CD4-positive, alpha-beta T cell (primary cell): ENCODE measurements at regions of chr2 and their contacts with region 1.

Region 1: DNA sequence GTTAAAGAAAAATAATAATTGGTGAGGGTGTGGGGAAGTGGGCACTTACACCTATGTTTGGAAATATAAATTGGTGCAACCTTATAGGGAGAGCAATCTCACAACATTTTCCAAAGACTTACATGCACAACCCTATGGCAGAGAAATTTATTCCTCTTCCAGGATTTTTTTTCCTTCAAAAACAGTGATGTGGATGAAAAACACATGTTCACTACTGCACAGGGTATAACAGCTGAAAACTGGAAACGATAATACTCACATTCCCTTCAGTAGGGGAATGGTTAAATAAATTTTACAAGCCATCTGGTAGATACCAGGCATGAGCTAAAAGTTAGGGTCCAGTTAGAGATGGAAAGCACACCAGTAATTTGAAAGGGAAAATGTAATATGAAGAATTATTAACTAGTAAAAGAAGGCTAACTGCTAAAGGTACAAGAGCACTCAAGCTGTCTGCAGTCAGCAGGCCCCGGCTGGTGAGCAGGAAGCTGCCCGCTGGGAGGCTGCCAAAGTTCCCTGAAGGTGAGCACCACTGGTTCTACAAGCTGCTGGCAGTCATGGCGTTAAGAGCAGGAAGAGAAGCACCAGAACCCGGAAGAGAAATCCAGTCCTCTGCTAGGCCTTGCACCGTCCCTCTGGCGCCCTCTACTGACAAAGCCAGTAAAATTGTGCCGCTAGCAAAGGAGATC is 28.4 kb upstream of the CASP8 start:
- DNase-seq: peak; percentile 78 to 97 (median 88)
- ATAC-seq: peak; percentile 51
- H3K4me3 ChIP-seq: peak overlapping the region; percentile 4
- H3K4me3 Mint-ChIP-seq: peak overlapping the region; percentile 97
- H3K27ac ChIP-seq: no peak overlapping the region
- H3K27ac Mint-ChIP-seq: peak overlapping the region; percentile 95
- H3K4me1 ChIP-seq: peaks cover 36% of the 10 kb centered on the region
- H3K4me1 Mint-ChIP-seq: peaks cover 70% of the 10 kb centered on the region
- H3K27me3 ChIP-seq: no peaks in the 10 kb centered on the region
- H3K27me3 Mint-ChIP-seq: no peaks in the 10 kb centered on the region
- CTCF ChIP-seq: peak; percentile 85

Region 2: DNA sequence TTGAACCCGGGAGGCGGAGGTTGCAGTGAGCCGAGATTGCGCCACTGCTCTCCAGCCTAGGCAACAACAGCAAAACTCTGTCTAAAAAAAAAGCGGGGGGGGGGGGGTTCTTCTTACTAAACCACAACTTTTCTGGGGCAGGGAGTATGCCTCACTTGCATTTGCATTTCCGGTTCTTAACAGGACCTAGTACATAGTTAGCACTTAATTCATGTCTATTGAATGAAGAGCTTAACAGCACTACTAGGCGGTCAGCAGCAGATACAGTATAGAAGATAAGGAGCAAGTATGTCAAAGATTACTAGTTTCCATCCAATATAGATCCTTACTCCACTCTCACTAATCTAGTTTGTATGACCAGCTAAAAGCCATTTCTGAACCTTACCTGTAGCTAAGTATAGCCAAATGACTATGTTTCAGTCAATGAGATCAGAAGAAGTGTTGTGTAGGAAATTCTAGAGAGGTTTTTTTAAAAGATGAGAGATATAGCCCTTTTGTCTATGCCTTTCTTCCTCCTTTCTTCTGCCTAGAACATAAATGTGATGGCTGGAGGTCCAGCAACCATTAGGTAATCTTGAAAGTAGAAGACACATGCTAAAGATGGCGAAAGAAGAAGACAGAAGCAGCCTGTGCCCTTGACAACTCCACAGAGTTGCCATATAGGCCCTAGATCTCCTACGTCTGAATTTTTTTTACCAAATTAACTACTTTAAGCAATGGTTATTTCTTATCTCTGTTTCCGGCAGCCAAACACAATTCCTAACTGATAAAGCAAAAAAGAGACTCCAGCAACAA is 171.8 kb before region 1 on chr2:
- CTCF ChIA-PET with region 1: no interaction called
- POLR2A ChIA-PET with region 1: no interaction called
- intact Hi-C with region 1: no loop called
- DNase-seq: peak in 2 of 14 experiments; percentile 15 to 44
- ATAC-seq: peak; percentile 29
- H3K4me3 ChIP-seq: no peak overlapping the region
- H3K4me3 Mint-ChIP-seq: no peak overlapping the region
- H3K27ac ChIP-seq: no peak overlapping the region
- H3K27ac Mint-ChIP-seq: peak overlapping the region; percentile 32
- H3K4me1 ChIP-seq: peaks cover 9% of the 10 kb centered on the region
- H3K4me1 Mint-ChIP-seq: peaks cover 57% of the 10 kb centered on the region
- H3K27me3 ChIP-seq: no peaks in the 10 kb centered on the region
- H3K27me3 Mint-ChIP-seq: no peaks in the 10 kb centered on the region
- CTCF ChIP-seq: no peak

Region 3: GRCh38 chr2:201071479-201072200 is 160.3 kb before region 1 on chr2 and contains the starts of genes HYCC2 and NDUFB3:
- CTCF ChIA-PET with region 1: interaction called, 9 read pairs
- POLR2A ChIA-PET with region 1: interaction called, 5 read pairs
- intact Hi-C with region 1: loop called in 1 of 2 experiments (anchors 5 kb)
- DNase-seq: peak; percentile 85 to 98 (median 90)
- ATAC-seq: peak; percentile 92
- H3K4me3 ChIP-seq: peak within 1 kb of the TSS; percentile 87
- H3K4me3 Mint-ChIP-seq: peak within 1 kb of the TSS; percentile 99
- H3K27ac ChIP-seq: peak within 1 kb of the TSS; percentile 84 to 93
- H3K27ac Mint-ChIP-seq: peak within 1 kb of the TSS; percentile 97
- H3K4me1 ChIP-seq: peaks cover 18% of the 10 kb centered on the region
- H3K4me1 Mint-ChIP-seq: peaks cover 50% of the 10 kb centered on the region
- H3K27me3 ChIP-seq: no peaks in the 10 kb centered on the region
- H3K27me3 Mint-ChIP-seq: no peaks in the 10 kb centered on the region
- CTCF ChIP-seq: peak; percentile 39
- total RNA-seq, gene HYCC2: 29.2 to 30.7 TPM
- total RNA-seq, gene NDUFB3: 10.1 to 13.6 TPM

Region 4: DNA sequence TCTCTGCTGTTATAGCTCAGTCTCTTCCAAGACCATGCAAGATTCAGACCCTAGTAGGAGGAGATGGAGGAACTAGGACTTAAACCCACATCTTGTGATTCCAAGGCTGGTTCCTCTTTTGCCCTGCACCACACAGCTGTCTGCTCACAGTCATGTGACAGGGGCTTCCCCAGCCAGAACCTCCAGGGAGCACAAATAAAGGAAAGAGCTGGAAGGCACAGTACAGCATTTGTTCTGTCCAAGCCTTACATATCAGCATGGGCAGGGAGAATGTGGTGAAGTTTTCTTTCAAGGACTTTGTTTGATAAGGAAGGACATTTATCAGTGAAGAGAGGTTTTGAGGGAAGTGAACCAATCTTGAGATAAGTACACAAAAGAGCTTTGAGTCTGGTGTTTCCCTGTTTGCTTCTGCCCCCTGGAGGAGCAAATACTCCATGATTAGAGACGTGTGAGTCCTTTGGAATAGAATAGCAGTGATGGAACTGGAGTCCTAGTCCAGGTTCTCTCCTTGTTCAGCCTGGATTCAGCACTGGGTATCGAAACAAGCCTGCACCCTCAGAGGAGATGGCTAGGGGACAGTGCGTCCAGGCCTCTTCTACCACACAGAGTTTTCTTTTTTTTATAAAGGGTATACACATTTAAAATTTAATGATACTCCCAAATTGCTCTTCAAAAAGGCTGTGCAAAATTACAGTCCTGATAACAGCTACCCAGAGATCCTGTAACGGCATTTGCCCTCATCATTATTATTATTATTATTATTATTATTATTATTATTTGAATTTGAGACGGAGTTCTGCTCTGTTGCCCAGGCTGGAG is 73.6 kb before region 1 on chr2:
- CTCF ChIA-PET with region 1: interaction called, 19 read pairs
- POLR2A ChIA-PET with region 1: interaction called, 11 read pairs
- intact Hi-C with region 1: no loop called
- DNase-seq: peak in 13 of 14 experiments; percentile 20 to 84 (median 50)
- ATAC-seq: peak; percentile 93
- H3K4me3 ChIP-seq: no peak overlapping the region
- H3K4me3 Mint-ChIP-seq: no peak overlapping the region
- H3K27ac ChIP-seq: peak overlapping the region; percentile 52 to 63
- H3K27ac Mint-ChIP-seq: peak overlapping the region; percentile 82
- H3K4me1 ChIP-seq: peaks cover 13% of the 10 kb centered on the region
- H3K4me1 Mint-ChIP-seq: peaks cover 12% of the 10 kb centered on the region
- H3K27me3 ChIP-seq: no peaks in the 10 kb centered on the region
- H3K27me3 Mint-ChIP-seq: no peaks in the 10 kb centered on the region
- CTCF ChIP-seq: peak; percentile 70

Region 5: GRCh38 chr2:201220102-201220570 is 11.8 kb before region 1 on chr2:
- CTCF ChIA-PET with region 1: interaction called, 54 read pairs
- POLR2A ChIA-PET with region 1: interaction called, 8 read pairs
- intact Hi-C with region 1: no loop called
- DNase-seq: peak in 5 of 14 experiments; percentile 20 to 30 (median 28)
- ATAC-seq: peak; percentile 29
- H3K4me3 ChIP-seq: no peak overlapping the region
- H3K4me3 Mint-ChIP-seq: peak overlapping the region; percentile 32
- H3K27ac ChIP-seq: peak overlapping the region in 1 of 2 donors; percentile 48
- H3K27ac Mint-ChIP-seq: peak overlapping the region; percentile 81
- H3K4me1 ChIP-seq: peaks cover 27% of the 10 kb centered on the region
- H3K4me1 Mint-ChIP-seq: peaks cover 65% of the 10 kb centered on the region
- H3K27me3 ChIP-seq: no peaks in the 10 kb centered on the region
- H3K27me3 Mint-ChIP-seq: no peaks in the 10 kb centered on the region
- CTCF ChIP-seq: no peak

Region 6: DNA sequence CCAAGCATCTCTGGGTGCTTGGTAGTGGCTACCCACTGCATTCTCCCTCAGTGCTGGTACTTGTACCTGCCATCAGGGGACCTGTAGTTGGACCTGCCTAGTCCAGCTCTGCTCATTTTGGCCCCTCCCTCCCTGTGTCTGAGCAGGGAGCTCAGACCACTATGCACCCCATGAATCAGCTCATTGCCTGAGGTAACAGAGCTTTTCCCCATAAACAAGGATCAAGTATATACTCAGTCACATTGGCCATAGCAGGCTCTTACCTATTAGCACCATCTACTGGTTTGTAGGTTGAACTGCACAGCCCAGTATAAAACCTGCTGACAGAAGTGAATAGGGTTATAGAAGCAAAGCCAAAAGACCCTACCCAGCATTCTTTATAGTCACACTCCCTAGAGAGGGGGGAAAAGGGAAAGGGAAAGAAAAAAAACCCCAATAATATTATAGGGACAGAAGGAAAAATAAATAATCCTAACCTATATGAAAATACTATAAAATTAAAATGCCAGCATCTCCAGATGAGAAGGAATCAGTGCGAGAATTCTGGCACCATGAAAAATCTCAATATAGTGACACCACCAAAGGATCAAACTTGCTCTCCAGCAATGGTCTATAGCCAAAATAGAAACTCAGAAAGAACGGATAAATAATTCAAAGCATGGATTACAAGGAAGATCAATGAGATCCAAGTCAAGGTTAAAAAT is 132.1 kb after region 1 on chr2:
- CTCF ChIA-PET with region 1: interaction called, 22 read pairs
- POLR2A ChIA-PET with region 1: interaction called, 14 read pairs
- intact Hi-C with region 1: loop called (anchors 1 kb)
- DNase-seq: peak in 7 of 14 experiments; percentile 3 to 75 (median 48)
- ATAC-seq: peak; percentile 97
- H3K4me3 ChIP-seq: no peak overlapping the region
- H3K4me3 Mint-ChIP-seq: no peak overlapping the region
- H3K27ac ChIP-seq: no peak overlapping the region
- H3K27ac Mint-ChIP-seq: peak overlapping the region; percentile 28
- H3K4me1 ChIP-seq: peaks cover 17% of the 10 kb centered on the region
- H3K4me1 Mint-ChIP-seq: peaks cover 36% of the 10 kb centered on the region
- H3K27me3 ChIP-seq: no peaks in the 10 kb centered on the region
- H3K27me3 Mint-ChIP-seq: no peaks in the 10 kb centered on the region
- CTCF ChIP-seq: peak; percentile 95

Region 7: DNA sequence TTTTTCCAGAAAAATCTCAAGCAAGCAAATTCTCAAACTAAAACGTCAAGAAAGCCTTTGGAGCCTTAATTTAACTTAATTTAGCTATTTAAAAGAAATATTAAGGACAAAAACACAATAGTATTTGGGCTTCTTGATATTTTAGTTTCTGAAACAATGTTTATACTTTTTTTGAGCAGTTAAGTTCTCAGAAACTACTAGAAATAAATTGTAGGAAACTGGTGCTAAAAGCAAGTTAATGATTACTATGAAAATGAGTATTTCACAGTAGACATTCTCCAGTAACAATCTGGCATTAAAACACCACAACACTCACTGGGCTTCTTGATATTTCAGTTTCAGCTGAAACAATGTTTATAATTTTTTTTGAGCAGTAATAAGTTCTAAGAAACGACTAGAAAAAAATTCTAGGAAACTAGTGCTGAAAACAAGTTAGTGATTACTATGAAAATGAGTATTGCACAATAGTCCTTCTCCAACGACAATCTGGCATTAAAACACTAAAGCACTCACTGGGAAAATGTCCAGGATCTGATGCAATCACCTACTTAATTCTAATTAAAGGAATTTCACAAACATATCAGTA is 174.2 kb after region 1 on chr2:
- CTCF ChIA-PET with region 1: no interaction called
- POLR2A ChIA-PET with region 1: no interaction called
- intact Hi-C with region 1: no loop called
- DNase-seq: no peak
- ATAC-seq: no peak
- H3K4me3 ChIP-seq: no peak overlapping the region
- H3K4me3 Mint-ChIP-seq: no peak overlapping the region
- H3K27ac ChIP-seq: no peak overlapping the region
- H3K27ac Mint-ChIP-seq: no peak overlapping the region
- H3K4me1 ChIP-seq: no peaks in the 10 kb centered on the region
- H3K4me1 Mint-ChIP-seq: peaks cover 48% of the 10 kb centered on the region
- H3K27me3 ChIP-seq: no peaks in the 10 kb centered on the region
- H3K27me3 Mint-ChIP-seq: no peaks in the 10 kb centered on the region
- CTCF ChIP-seq: no peak

Region 8: GRCh38 chr2:201847481-201847880 is 615.6 kb after region 1 on chr2:
- CTCF ChIA-PET with region 1: no interaction called
- POLR2A ChIA-PET with region 1: no interaction called
- intact Hi-C with region 1: no loop called
- DNase-seq: no peak
- ATAC-seq: no peak
- H3K4me3 ChIP-seq: no peak overlapping the region
- H3K4me3 Mint-ChIP-seq: no peak overlapping the region
- H3K27ac ChIP-seq: no peak overlapping the region
- H3K27ac Mint-ChIP-seq: no peak overlapping the region
- H3K4me1 ChIP-seq: no peaks in the 10 kb centered on the region
- H3K4me1 Mint-ChIP-seq: no peaks in the 10 kb centered on the region
- H3K27me3 ChIP-seq: peaks cover 0 to 6% of the 10 kb centered on the region in 2 experiments
- H3K27me3 Mint-ChIP-seq: peaks cover 12% of the 10 kb centered on the region
- CTCF ChIP-seq: no peak

Region 9: DNA sequence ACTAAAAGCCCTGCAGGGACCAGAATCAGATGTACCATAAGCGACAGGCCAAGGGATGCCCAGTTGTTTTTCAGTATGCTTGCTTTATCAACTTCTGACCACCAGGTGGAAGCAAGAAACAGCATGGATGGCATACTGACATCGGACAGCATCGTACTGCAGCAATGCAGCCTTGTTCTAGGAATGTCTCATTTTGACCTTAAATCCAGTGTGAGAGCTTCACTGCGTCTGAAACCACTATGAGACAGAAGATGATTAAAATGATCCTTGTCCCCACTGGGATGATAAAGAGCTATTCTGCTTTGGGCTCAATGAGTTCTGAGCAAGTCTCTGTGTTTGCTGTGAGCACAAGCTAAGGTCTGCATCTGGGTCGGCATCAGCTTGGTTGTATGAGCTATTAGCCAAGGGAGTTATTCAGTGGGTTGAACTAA is 628.7 kb after region 1 on chr2:
- CTCF ChIA-PET with region 1: no interaction called
- POLR2A ChIA-PET with region 1: no interaction called
- intact Hi-C with region 1: loop called in 1 of 2 experiments (anchors 5 kb)
- DNase-seq: peak in 11 of 14 experiments; percentile 3 to 72 (median 19)
- ATAC-seq: peak; percentile 71
- H3K4me3 ChIP-seq: no peak overlapping the region
- H3K4me3 Mint-ChIP-seq: no peak overlapping the region
- H3K27ac ChIP-seq: no peak overlapping the region
- H3K27ac Mint-ChIP-seq: no peak overlapping the region
- H3K4me1 ChIP-seq: peaks cover 9% of the 10 kb centered on the region
- H3K4me1 Mint-ChIP-seq: peaks cover 20% of the 10 kb centered on the region
- H3K27me3 ChIP-seq: peaks cover 0 to 7% of the 10 kb centered on the region in 2 experiments
- H3K27me3 Mint-ChIP-seq: peaks cover 42% of the 10 kb centered on the region
- CTCF ChIP-seq: peak; percentile 75

Region 10: GRCh38 chr2:202545523-202545922 is 1313.6 kb after region 1 on chr2:
- CTCF ChIA-PET with region 1: no interaction called
- POLR2A ChIA-PET with region 1: no interaction called
- intact Hi-C with region 1: no loop called
- DNase-seq: no peak
- ATAC-seq: no peak
- H3K4me3 ChIP-seq: no peak overlapping the region
- H3K4me3 Mint-ChIP-seq: no peak overlapping the region
- H3K27ac ChIP-seq: no peak overlapping the region
- H3K27ac Mint-ChIP-seq: no peak overlapping the region
- H3K4me1 ChIP-seq: no peaks in the 10 kb centered on the region
- H3K4me1 Mint-ChIP-seq: no peaks in the 10 kb centered on the region
- H3K27me3 ChIP-seq: no peaks in the 10 kb centered on the region
- H3K27me3 Mint-ChIP-seq: no peaks in the 10 kb centered on the region
- CTCF ChIP-seq: no peak